K562 (cell line): ENCODE measurements at regions of chr15 and their contacts with region 1.

Region 1: GRCh38 chr15:61834076-61834697 is 226.1 kb downstream of the VPS13C start:
- DNase-seq: peak; percentile 62 to 81 (median 66)
- ATAC-seq: peak; percentile 90
- H3K4me3 ChIP-seq: no peak overlapping the region
- H3K27ac ChIP-seq: no peak overlapping the region
- H3K4me1 ChIP-seq: no peaks in the 10 kb centered on the region
- H3K27me3 ChIP-seq: peaks cover 19 to 54% of the 10 kb centered on the region in 2 experiments
- CTCF ChIP-seq: peak; percentile 82 to 89 (median 86)
- EP300 ChIP-seq: no peak
- POLR2A ChIP-seq: no peak
- RAD21 ChIP-seq: peak; percentile 57 to 83

Region 2: DNA sequence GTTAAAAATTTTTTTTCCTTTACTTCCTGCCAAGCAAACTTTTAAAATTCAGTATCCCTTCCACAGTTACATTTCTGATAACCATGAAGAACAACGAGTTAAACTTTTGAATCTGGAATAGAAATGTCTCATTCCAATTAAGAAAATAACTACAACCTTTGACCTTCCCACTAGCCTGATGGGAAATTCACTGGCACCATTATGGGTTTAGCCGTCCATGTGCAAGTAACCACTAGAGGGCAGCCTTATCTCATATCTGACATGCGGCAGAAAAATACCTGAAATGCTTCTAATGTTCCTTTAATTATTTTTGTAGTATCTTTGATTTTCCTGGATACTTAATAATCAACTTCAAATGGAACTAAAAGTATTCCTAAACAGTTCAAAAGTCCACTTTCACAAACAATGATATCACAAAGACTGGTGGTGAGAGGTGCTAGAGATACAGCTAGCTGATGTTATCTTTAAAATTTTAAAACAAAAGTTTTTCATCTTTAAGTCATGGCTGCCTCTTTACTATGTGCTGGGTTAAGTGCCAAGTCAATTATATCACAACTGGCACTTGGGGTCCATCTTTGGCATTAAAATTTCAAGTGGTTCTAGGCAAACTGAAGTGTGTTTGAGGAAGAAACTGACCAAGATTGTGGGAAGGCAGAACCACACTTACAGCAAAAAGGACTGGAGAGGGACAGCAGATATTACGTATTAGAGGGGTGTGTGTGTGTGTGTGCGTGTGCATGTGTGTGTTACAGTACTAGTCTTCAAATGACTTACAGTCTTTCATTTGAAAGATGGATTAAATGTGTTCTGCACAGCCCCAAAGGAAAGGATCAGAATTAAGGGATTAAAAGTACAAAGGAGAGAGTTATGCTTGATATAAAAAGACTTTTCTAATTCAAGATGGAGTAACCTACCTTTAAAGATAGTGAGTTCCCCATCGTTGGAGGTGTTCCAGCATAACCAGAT is 1248.2 kb before region 1 on chr15:
- CTCF ChIA-PET with region 1: interaction called, 4 read pairs
- POLR2A ChIA-PET with region 1: no interaction called
- in situ Hi-C with region 1: loop called (anchors 10 kb)
- intact Hi-C with region 1: loop called (anchors 10 kb)
- DNase-seq: peak; percentile 69 to 74 (median 72)
- ATAC-seq: peak; percentile 87
- H3K4me3 ChIP-seq: no peak overlapping the region
- H3K27ac ChIP-seq: no peak overlapping the region
- H3K4me1 ChIP-seq: no peaks in the 10 kb centered on the region; a peak in 1 of 5 replicates
- H3K27me3 ChIP-seq: peaks cover 3 to 7% of the 10 kb centered on the region in 2 experiments; a peak in 4 of 5 replicates
- CTCF ChIP-seq: peak; percentile 70 to 92 (median 75)
- EP300 ChIP-seq: no peak
- POLR2A ChIP-seq: no peak
- RAD21 ChIP-seq: peak; percentile 77 to 85

Region 3: DNA sequence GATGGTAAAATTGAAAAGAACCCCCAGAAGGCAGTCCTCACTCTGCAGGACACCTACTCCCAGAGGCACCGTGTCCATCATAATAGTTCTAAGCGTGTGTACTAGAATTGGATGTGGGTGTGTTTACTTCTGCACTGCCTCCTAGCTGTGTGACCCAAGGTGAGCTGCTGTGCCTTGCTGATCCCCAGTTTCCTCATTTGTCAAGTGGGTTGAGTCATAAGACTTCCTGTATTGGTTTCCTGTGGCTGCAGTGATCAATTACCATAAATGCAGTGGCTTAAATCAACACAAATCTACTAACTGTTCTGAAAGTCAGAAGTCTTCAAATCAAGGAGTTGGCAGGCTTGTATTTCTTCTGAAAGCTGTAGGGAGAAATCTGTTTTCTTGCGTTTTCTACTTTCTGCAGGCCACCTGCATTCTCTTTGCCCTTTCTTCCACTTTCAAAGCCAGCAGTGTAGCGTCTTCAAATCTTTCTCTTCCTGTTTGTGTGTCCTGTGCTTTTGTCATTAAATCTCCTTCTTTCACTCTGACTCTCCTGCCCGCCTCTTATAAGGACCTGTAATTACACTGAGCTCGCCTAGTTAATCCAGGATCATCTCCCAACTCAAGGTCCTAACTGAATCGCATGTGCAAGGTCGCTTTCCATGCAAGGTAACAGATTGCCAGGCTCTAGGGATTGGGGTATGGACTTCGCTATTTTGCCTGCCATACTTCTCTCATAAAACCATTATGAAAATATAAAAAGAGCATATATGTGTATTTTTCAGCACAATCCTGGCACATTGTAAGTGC is 664.1 kb before region 1 on chr15:
- CTCF ChIA-PET with region 1: no interaction called
- POLR2A ChIA-PET with region 1: no interaction called
- in situ Hi-C with region 1: loop called (anchors 10 kb)
- intact Hi-C with region 1: loop called (anchors 1 kb)
- DNase-seq: no peak
- ATAC-seq: no peak
- H3K4me3 ChIP-seq: no peak overlapping the region
- H3K27ac ChIP-seq: no peak overlapping the region
- H3K4me1 ChIP-seq: no peaks in the 10 kb centered on the region
- H3K27me3 ChIP-seq: no peaks in the 10 kb centered on the region
- CTCF ChIP-seq: no peak
- EP300 ChIP-seq: no peak
- POLR2A ChIP-seq: no peak
- RAD21 ChIP-seq: no peak

Region 4: DNA sequence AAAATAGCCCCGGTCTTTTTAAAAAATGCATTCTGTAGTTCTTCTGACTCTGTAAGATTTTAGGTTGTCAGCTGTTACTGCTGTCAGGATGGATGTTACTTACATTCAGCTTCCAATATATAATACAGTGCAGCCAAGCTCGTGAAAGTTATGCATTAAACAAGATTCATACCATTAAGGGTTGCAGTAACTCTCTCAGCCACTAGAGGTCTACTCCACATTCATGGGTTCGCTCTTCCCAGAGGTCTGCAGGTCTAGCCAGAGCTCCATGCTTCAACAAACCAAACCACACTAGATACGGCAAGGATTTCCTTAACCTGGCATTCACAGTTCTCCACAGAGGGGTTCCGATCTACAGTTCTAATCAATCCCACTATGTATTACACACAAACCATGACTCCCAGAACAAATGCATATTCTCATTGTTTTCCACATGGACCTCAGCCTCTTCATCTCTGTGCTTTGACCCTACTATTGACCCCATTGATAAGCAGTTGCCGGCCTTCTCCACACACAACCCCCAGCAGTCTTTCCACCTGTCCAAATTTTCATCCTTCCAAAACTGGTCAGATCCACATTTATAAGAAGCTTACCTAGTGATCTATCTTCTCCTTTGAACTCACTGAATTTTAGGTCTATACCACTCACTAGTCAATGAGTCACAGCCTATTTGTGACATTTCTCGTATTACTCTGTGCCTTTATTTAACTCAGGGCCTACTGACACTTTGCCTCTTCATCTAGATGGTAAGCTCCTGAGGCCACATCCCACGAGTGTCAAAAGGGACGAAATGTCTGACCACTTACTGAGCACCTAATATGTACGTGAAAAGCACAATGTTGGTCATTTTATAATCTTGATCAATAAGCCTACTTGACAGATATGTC is 638.8 kb before region 1 on chr15:
- CTCF ChIA-PET with region 1: interaction called, 3 read pairs
- POLR2A ChIA-PET with region 1: no interaction called
- in situ Hi-C with region 1: no loop called
- intact Hi-C with region 1: loop called (anchors 1 kb)
- DNase-seq: peak; percentile 44 to 60 (median 50)
- ATAC-seq: peak; percentile 84
- H3K4me3 ChIP-seq: no peak overlapping the region
- H3K27ac ChIP-seq: no peak overlapping the region
- H3K4me1 ChIP-seq: no peaks in the 10 kb centered on the region
- H3K27me3 ChIP-seq: peaks cover 6 to 15% of the 10 kb centered on the region in 2 experiments; a peak in 4 of 5 replicates
- CTCF ChIP-seq: peak; percentile 51 to 72 (median 69); a peak in 5 of 6 replicates
- EP300 ChIP-seq: no peak
- POLR2A ChIP-seq: no peak
- RAD21 ChIP-seq: peak; percentile 29 to 55; a peak in 3 of 4 replicates

Region 5: DNA sequence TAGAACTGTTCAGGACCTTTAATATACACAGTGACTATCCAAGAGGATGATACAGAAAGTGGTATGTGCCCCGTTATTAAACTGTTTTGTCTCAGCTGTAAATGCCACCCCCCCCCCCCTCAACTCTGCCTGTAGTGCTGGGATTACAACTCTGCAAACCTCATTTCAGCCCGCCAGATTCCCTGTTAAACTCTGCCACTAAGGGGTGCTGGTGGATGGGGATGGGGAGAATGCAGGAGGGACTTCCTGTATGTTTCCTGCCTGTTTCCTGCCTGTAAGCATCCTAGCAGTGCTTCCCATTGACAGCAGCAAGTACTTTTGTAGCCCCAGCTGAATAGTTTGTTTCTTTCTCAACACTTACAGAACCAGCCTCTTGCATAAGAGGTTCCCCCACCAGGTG is 303.4 kb before region 1 on chr15:
- CTCF ChIA-PET with region 1: no interaction called
- POLR2A ChIA-PET with region 1: no interaction called
- in situ Hi-C with region 1: no loop called
- intact Hi-C with region 1: loop called (anchors 10 kb)
- DNase-seq: peak in 3 of 4 experiments; percentile 2 to 15 (median 14)
- ATAC-seq: no peak
- H3K4me3 ChIP-seq: no peak overlapping the region
- H3K27ac ChIP-seq: no peak overlapping the region
- H3K4me1 ChIP-seq: no peaks in the 10 kb centered on the region
- H3K27me3 ChIP-seq: peaks cover 0 to 11% of the 10 kb centered on the region in 2 experiments; a peak in 3 of 5 replicates
- CTCF ChIP-seq: peak in 2 of 3 experiments; percentile 5 to 20; a peak in 1 of 6 replicates
- EP300 ChIP-seq: no peak
- POLR2A ChIP-seq: no peak
- RAD21 ChIP-seq: no peak

Region 6: GRCh38 chr15:61702224-61703020 is 131.8 kb before region 1 on chr15:
- CTCF ChIA-PET with region 1: no interaction called
- POLR2A ChIA-PET with region 1: no interaction called
- in situ Hi-C with region 1: no loop called
- intact Hi-C with region 1: loop called (anchors 10 kb)
- DNase-seq: no peak
- ATAC-seq: no peak
- H3K4me3 ChIP-seq: no peak overlapping the region
- H3K27ac ChIP-seq: no peak overlapping the region
- H3K4me1 ChIP-seq: no peaks in the 10 kb centered on the region
- H3K27me3 ChIP-seq: no peaks in the 10 kb centered on the region; a peak in 2 of 5 replicates
- CTCF ChIP-seq: no peak
- EP300 ChIP-seq: no peak
- POLR2A ChIP-seq: no peak
- RAD21 ChIP-seq: no peak